ENCODE measurements at regions of chr14 and their contacts with region 1.

Region 1: GRCh38 chr14:36941783-36942521 is 230.5 kb downstream of the SLC25A21 start:
- DNase-seq: peak; percentile 79
- ATAC-seq: peak; percentile 67
- H3K4me3 Mint-ChIP-seq: no peak overlapping the region
- H3K27ac Mint-ChIP-seq: no peak overlapping the region
- H3K4me1 Mint-ChIP-seq: no peaks in the 10 kb centered on the region
- H3K27me3 Mint-ChIP-seq: peaks cover 3% of the 10 kb centered on the region
- CTCF ChIP-seq: peak; percentile 96

Region 2: DNA sequence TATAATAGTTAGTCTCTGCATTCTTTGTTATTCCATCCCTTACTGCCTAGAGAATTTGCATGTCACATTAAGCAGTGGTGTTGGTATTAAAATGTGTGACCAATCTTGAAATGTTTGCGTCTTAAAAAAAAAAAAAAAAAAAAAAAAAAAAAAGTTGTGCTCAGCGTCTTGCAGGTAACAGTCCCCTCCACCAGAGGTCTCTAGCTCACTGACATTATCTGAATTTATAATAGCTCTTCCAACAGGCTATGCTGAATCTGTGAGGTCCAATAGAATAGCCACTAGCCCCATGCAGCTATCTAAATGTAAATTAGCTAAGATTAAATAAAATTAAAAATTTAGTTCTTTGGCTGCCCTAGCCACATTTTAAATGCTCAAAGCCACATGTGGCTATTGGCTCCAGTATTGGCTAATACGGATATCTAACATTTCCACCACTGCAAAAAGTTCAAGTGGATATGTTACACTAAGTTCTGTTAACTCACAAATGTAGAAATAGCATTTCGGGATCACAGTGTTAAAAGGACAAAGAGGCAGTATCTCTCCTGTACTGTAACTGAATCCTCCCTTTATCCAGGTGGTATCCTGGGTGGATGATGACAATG is 388.2 kb before region 1 on chr14:
- CTCF ChIA-PET with region 1: interaction called, 40 read pairs
- POLR2A ChIA-PET with region 1: no interaction called
- intact Hi-C with region 1: no loop called
- DNase-seq: peak; percentile 20
- ATAC-seq: peak; percentile 58
- H3K4me3 Mint-ChIP-seq: no peak overlapping the region
- H3K27ac Mint-ChIP-seq: no peak overlapping the region
- H3K4me1 Mint-ChIP-seq: no peaks in the 10 kb centered on the region
- H3K27me3 Mint-ChIP-seq: peaks cover 8% of the 10 kb centered on the region
- CTCF ChIP-seq: peak; percentile 58

Region 3: GRCh38 chr14:36931796-36932195 is 10.2 kb before region 1 on chr14:
- CTCF ChIA-PET with region 1: interaction called, 20 read pairs
- POLR2A ChIA-PET with region 1: no interaction called
- intact Hi-C with region 1: no loop called
- DNase-seq: no peak
- ATAC-seq: no peak
- H3K4me3 Mint-ChIP-seq: no peak overlapping the region
- H3K27ac Mint-ChIP-seq: no peak overlapping the region
- H3K4me1 Mint-ChIP-seq: no peaks in the 10 kb centered on the region
- H3K27me3 Mint-ChIP-seq: peaks cover 2% of the 10 kb centered on the region
- CTCF ChIP-seq: no peak

Region 4: DNA sequence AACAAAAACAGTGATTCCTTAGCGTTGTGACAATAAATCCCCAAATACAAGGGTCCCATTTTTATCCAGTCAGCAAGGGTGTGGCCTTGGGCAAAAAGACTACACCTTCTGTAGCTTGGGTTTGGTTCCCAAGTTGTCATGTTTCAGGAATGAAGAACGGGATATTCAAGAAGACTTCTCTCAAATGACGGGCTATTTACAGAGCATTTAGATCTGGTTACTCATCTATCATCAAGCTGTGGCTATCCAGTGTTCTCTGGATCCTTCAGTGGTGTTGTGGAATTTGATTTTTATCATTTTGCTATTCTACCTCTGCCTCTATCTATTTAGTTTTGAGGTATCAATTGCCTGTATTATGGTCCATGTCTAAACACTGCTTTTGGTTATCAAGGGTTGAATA is 10.8 kb after region 1 on chr14:
- CTCF ChIA-PET with region 1: interaction called, 23 read pairs
- POLR2A ChIA-PET with region 1: no interaction called
- intact Hi-C with region 1: no loop called
- DNase-seq: no peak
- ATAC-seq: no peak
- H3K4me3 Mint-ChIP-seq: no peak overlapping the region
- H3K27ac Mint-ChIP-seq: no peak overlapping the region
- H3K4me1 Mint-ChIP-seq: no peaks in the 10 kb centered on the region
- H3K27me3 Mint-ChIP-seq: peaks cover 2% of the 10 kb centered on the region
- CTCF ChIP-seq: no peak

Region 5: GRCh38 chr14:36981832-36982528 is 40.0 kb after region 1 on chr14:
- CTCF ChIA-PET with region 1: no interaction called
- POLR2A ChIA-PET with region 1: no interaction called
- intact Hi-C with region 1: no loop called
- DNase-seq: no peak
- ATAC-seq: no peak
- H3K4me3 Mint-ChIP-seq: no peak overlapping the region
- H3K27ac Mint-ChIP-seq: no peak overlapping the region
- H3K4me1 Mint-ChIP-seq: no peaks in the 10 kb centered on the region
- H3K27me3 Mint-ChIP-seq: no peaks in the 10 kb centered on the region
- CTCF ChIP-seq: no peak